Activated naive CD4-positive, alpha-beta T cell treated with anti-CD3 and anti-CD28 coated beads for 36 hours (primary cell): ENCODE measurements at regions of chrX and their contacts with region 1.

Region 1: DNA sequence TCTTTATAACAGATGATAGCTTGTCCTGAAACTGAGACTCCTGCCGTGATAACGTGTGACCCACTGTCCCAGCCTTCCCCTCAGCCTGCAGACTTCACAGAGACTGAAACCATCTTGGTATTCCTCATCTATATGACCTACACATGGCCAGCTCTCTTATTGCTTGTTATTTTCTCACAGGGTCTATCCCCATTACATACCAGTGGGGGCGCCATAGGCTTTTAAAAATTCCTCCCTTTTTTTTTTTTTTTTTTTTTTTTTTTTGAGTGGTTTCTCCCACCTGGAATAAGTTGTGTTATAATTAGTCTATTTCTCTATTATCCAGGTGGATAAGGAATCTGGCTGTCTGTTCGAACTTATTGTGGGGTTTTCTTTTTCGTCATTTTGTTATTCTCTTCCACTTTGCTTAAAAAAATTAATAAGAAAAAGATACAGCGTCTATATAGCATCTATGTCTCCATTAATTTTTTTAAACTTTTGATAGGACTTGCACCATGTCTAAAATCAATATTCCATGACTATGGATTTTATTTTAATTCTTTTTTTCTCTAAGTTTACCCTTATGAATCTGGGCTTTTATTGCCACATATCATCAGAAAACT is 47.2 kb downstream of the GYG2 start:
- DNase-seq: no peak
- H3K4me3 Mint-ChIP-seq: no peak overlapping the region
- H3K27ac Mint-ChIP-seq: no peak overlapping the region
- H3K4me1 Mint-ChIP-seq: no peaks in the 10 kb centered on the region
- H3K27me3 Mint-ChIP-seq: peaks cover 6% of the 10 kb centered on the region

Region 2: DNA sequence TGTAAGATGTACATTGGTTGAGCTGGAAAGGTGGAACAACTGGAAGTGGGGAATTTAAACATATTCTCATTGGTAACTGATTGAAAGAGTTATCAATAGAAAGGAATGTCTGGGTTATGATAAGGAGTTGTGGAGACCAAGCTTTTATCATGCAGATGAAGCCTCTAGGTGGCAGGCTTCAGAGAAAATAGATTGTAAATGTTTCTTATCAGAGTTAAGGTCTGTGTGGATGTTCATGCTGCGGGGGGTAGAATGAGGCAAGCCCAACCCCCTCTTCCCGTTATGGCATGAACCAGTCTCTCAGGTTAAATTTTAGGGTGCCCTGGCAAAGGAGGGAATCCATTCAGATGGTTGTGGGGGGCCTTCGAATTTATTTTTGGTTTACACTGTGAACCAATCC is 37.2 kb after region 1 on chrX:
- CTCF ChIA-PET with region 1: no interaction called
- intact Hi-C with region 1: no loop called
- DNase-seq: no peak
- H3K4me3 Mint-ChIP-seq: no peak overlapping the region
- H3K27ac Mint-ChIP-seq: no peak overlapping the region
- H3K4me1 Mint-ChIP-seq: no peaks in the 10 kb centered on the region
- H3K27me3 Mint-ChIP-seq: no peaks in the 10 kb centered on the region

Region 3: GRCh38 chrX:2974961-2975360 is 99.1 kb after region 1 on chrX:
- CTCF ChIA-PET with region 1: no interaction called
- intact Hi-C with region 1: no loop called
- DNase-seq: no peak
- H3K4me3 Mint-ChIP-seq: no peak overlapping the region
- H3K27ac Mint-ChIP-seq: no peak overlapping the region
- H3K4me1 Mint-ChIP-seq: no peaks in the 10 kb centered on the region
- H3K27me3 Mint-ChIP-seq: peaks cover 2% of the 10 kb centered on the region

Region 4: GRCh38 chrX:3037218-3037617 is 161.3 kb after region 1 on chrX:
- CTCF ChIA-PET with region 1: no interaction called
- intact Hi-C with region 1: loop called (anchors 10 kb)
- DNase-seq: no peak
- H3K4me3 Mint-ChIP-seq: no peak overlapping the region
- H3K27ac Mint-ChIP-seq: no peak overlapping the region
- H3K4me1 Mint-ChIP-seq: no peaks in the 10 kb centered on the region
- H3K27me3 Mint-ChIP-seq: peaks cover 3% of the 10 kb centered on the region